ENCODE measurements at regions of chr16 and their contacts with region 1.

Region 1: GRCh38 chr16:11051879-11052808 is 107.8 kb downstream of the CLEC16A start:
- DNase-seq: peak; percentile 75
- H3K4me3 Mint-ChIP-seq: peak overlapping the region; percentile 60
- H3K27ac Mint-ChIP-seq: peak overlapping the region; percentile 83
- H3K4me1 Mint-ChIP-seq: peaks cover 68% of the 10 kb centered on the region
- H3K27me3 Mint-ChIP-seq: no peaks in the 10 kb centered on the region

Region 2: DNA sequence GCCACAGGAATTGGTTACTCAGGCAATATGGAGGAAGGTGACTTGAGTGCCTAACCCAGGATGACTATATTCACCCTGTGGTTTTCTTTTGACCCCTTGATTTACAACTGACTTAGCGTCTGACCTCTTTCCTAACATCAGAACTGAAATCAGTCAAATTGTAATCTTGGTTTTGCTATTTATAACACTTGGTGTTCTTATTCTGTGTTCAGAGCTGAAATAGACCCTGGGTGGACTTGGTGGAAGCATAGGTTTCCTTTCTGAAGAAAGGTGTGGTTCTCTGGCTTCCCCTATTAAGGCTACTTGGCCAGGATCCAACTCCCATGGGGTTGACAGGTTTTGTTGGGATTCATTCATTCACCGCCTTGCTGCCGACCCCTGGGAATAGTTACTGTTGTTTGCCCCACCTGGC is 27.0 kb before region 1 on chr16:
- intact Hi-C with region 1: loop called (anchors 1 kb)
- DNase-seq: no peak
- H3K4me3 Mint-ChIP-seq: no peak overlapping the region
- H3K27ac Mint-ChIP-seq: peak overlapping the region; percentile 82
- H3K4me1 Mint-ChIP-seq: peaks cover 31% of the 10 kb centered on the region
- H3K27me3 Mint-ChIP-seq: no peaks in the 10 kb centered on the region

Region 3: GRCh38 chr16:11076259-11077018 is 24.3 kb after region 1 on chr16:
- intact Hi-C with region 1: loop called (anchors 1 kb)
- DNase-seq: peak; percentile 36
- H3K4me3 Mint-ChIP-seq: peak overlapping the region; percentile 48
- H3K27ac Mint-ChIP-seq: peak overlapping the region; percentile 90
- H3K4me1 Mint-ChIP-seq: peaks cover 94% of the 10 kb centered on the region
- H3K27me3 Mint-ChIP-seq: peaks cover 2% of the 10 kb centered on the region

Region 4: GRCh38 chr16:11105038-11105903 is 53.1 kb after region 1 on chr16:
- intact Hi-C with region 1: loop called (anchors 1 kb)
- DNase-seq: peak; percentile 44
- H3K4me3 Mint-ChIP-seq: peak overlapping the region; percentile 65
- H3K27ac Mint-ChIP-seq: peak overlapping the region; percentile 88
- H3K4me1 Mint-ChIP-seq: peaks cover 75% of the 10 kb centered on the region
- H3K27me3 Mint-ChIP-seq: no peaks in the 10 kb centered on the region

Region 5: DNA sequence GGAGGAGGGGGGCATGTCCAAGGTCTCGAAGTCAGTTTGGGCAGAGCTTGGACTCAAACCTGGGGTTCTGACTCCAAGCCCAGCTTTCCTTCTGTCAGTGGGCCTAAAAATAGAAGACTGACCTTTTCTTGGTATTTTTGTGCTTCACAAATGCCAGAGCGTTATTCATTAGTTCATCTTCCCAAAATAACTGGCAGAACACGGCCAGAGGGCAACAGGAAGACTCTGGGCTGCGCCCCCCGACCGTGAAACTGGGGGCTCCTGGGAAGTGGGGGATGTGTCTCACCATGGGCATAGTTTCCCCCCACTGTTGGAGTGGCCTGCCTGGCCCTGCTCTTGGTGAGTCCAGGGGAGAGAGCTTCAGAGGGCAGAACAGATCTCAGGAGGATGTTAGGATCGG is 109.8 kb after region 1 on chr16:
- intact Hi-C with region 1: loop called (anchors 1 kb)
- DNase-seq: no peak
- H3K4me3 Mint-ChIP-seq: no peak overlapping the region
- H3K27ac Mint-ChIP-seq: no peak overlapping the region
- H3K4me1 Mint-ChIP-seq: peaks cover 69% of the 10 kb centered on the region
- H3K27me3 Mint-ChIP-seq: no peaks in the 10 kb centered on the region

Region 6: GRCh38 chr16:11175787-11176341 is 123.7 kb after region 1 on chr16:
- intact Hi-C with region 1: loop called (anchors 1 kb)
- DNase-seq: no peak
- H3K4me3 Mint-ChIP-seq: peak overlapping the region; percentile 50
- H3K27ac Mint-ChIP-seq: peak overlapping the region; percentile 78
- H3K4me1 Mint-ChIP-seq: peaks cover 61% of the 10 kb centered on the region
- H3K27me3 Mint-ChIP-seq: peaks cover 2% of the 10 kb centered on the region

Region 7: GRCh38 chr16:11232852-11233726 is 180.9 kb after region 1 on chr16:
- intact Hi-C with region 1: loop called (anchors 1 kb)
- DNase-seq: peak; percentile 91
- H3K4me3 Mint-ChIP-seq: peak overlapping the region; percentile 59
- H3K27ac Mint-ChIP-seq: peak overlapping the region; percentile 95
- H3K4me1 Mint-ChIP-seq: peaks cover 89% of the 10 kb centered on the region
- H3K27me3 Mint-ChIP-seq: no peaks in the 10 kb centered on the region

Measured in activated T-helper 1 cell treated with anti-CD3 and anti-CD28 coated beads, Interleukin-12 subunit alpha, Interleukin-12 subunit beta, Interleukin-2, Interleukin-4 antibody, amounts not matched to agents 30 ng/mL and 10 ng/mL and 1 ng/mL, durations not matched to agents 14 hours and 24 hours and 36 hours (primary cell).